ENCODE measurements at regions of chr16 and their contacts with region 1.

Region 1: DNA sequence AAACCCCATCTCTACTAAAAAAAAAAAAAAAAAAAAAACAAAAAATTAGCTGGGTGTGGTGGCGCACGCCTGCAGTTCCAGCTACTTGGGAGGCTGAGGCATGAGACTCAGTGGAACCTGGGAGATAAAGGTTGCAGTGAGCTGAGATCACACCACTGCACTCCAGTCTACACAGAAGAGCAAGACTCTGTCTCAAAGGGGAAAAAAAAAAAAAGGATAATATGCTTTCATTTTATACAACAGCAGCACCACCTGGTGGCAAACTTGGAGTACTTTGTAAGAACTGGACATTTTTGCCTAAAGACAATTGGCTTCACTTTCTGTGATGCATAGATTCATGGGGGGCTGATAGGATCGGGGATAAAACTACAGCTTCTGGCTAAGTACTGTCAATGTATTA is 8.5 kb downstream of the CHTF8 start:
- DNase-seq: peak in 4 of 10 donors; percentile 27 to 71 (median 40)
- H3K4me3 ChIP-seq: no peak overlapping the region
- H3K27ac ChIP-seq: no peak overlapping the region
- H3K27me3 ChIP-seq: no peaks in the 10 kb centered on the region
- CTCF ChIP-seq: peak; percentile 67 to 88 (median 77)

Region 2: DNA sequence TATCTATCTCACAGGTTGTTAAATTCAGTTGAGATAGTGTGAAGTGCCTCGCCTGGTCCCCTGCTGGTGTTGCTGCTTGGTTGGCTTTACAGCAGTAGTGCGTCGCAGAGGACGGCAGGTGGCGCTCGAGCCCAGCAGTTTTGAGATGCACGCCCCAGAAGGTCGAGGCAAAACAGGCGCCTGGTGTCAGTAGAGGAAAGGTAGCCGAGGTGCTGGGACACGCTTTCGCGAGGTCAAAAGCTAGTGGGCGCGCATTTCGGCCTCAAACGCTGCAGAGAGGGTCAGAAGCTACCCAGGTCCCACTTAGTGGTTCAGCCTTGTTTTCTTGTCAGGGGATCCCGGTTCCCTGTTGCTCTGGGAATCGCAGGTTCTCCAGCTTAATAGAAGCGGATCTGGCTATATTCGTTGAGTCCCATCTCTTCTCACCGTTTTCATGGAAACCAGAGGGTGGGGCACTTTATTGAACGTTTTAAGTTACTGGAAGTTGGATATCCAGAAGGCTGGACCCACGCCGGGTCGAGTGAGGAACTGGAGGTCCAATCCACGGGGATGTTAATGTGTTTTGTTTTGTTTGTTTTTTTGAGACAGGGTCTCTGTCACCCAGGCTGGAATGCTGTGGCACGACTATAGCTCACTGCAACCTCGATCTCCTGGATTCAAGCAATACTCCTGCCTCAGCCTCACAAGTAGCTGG is 595.1 kb before region 1 on chr16:
- intact Hi-C with region 1: loop called in 1 of 2 experiments (anchors 2 kb)
- DNase-seq: peak; percentile 80 to 91 (median 87)
- H3K4me3 ChIP-seq: peak overlapping the region in 55 of 59 donors; percentile 12 to 98 (median 45)
- H3K27ac ChIP-seq: peak overlapping the region in 8 of 59 donors; percentile 14 to 75 (median 46)
- H3K27me3 ChIP-seq: no peaks in the 10 kb centered on the region
- CTCF ChIP-seq: peak; percentile 69 to 99 (median 96)

Region 3: GRCh38 chr16:68538880-68539701 is 584.8 kb before region 1 on chr16 and contains the start of gene ZFP90:
- intact Hi-C with region 1: loop called in 1 of 2 experiments (anchors 5 kb)
- DNase-seq: peak; percentile 74 to 94 (median 84)
- H3K4me3 ChIP-seq: peak within 1 kb of the TSS; percentile 61 to 100 (median 98)
- H3K27ac ChIP-seq: peak within 1 kb of the TSS in 58 of 59 donors; percentile 19 to 97 (median 85)
- H3K27me3 ChIP-seq: no peaks in the 10 kb centered on the region
- CTCF ChIP-seq: peak in 42 of 56 donors; percentile 2 to 60 (median 32)
- total RNA-seq, gene ZFP90: 43.3 to 78.1 (median 60.5) TPM

Region 4: GRCh38 chr16:68704232-68704867 is 419.6 kb before region 1 on chr16:
- intact Hi-C with region 1: loop called in 1 of 2 experiments (anchors 5 kb)
- DNase-seq: peak; percentile 28 to 89 (median 85)
- H3K4me3 ChIP-seq: no peak overlapping the region
- H3K27ac ChIP-seq: peak overlapping the region in 12 of 59 donors; percentile 1 to 69 (median 46)
- H3K27me3 ChIP-seq: no peaks in the 10 kb centered on the region
- CTCF ChIP-seq: peak; percentile 27 to 90 (median 78)

Region 5: GRCh38 chr16:68848786-68849185 is 275.1 kb before region 1 on chr16:
- intact Hi-C with region 1: loop called in 1 of 2 experiments (anchors 5 kb)
- DNase-seq: no peak
- H3K4me3 ChIP-seq: no peak overlapping the region
- H3K27ac ChIP-seq: no peak overlapping the region
- H3K27me3 ChIP-seq: no peaks in the 10 kb centered on the region
- CTCF ChIP-seq: no peak

Region 6: GRCh38 chr16:68860978-68861892 is 262.7 kb before region 1 on chr16:
- intact Hi-C with region 1: no loop called
- DNase-seq: no peak
- H3K4me3 ChIP-seq: no peak overlapping the region
- H3K27ac ChIP-seq: no peak overlapping the region
- H3K27me3 ChIP-seq: no peaks in the 10 kb centered on the region
- CTCF ChIP-seq: no peak

Region 7: GRCh38 chr16:68902008-68902968 is 221.6 kb before region 1 on chr16:
- intact Hi-C with region 1: loop called (anchors 5 kb)
- DNase-seq: peak in 4 of 10 donors; percentile 5 to 44 (median 29)
- H3K4me3 ChIP-seq: no peak overlapping the region
- H3K27ac ChIP-seq: peak overlapping the region in 42 of 59 donors; percentile 5 to 79 (median 53)
- H3K27me3 ChIP-seq: no peaks in the 10 kb centered on the region
- CTCF ChIP-seq: peak; percentile 52 to 84 (median 74)

Region 8: DNA sequence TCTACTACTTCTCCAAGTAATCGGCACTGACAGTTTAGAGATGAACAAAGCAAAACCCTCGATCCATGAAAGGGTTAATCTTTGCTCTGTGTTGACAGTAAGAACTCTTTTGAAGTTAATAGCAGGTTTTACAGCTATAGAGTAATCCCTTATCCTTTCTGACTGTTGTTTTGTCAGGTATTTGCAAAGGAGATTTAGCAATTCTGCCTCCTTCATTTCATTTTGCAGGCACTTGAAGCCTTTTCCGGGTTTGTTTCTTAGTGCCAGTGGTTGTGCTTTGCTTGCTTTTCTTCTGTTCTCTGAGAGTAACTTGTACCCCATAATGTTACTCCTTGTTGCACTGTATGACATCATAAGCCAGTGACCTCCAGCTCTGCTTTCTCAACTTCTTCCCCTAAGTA is 216.1 kb before region 1 on chr16:
- intact Hi-C with region 1: loop called (anchors 5 kb)
- DNase-seq: no peak
- H3K4me3 ChIP-seq: no peak overlapping the region
- H3K27ac ChIP-seq: no peak overlapping the region
- H3K27me3 ChIP-seq: no peaks in the 10 kb centered on the region
- CTCF ChIP-seq: no peak

Region 9: GRCh38 chr16:69186642-69187445 is 62.9 kb after region 1 on chr16 and contains the start of gene SNTB2:
- intact Hi-C with region 1: no loop called
- DNase-seq: peak; percentile 79 to 95 (median 92)
- H3K4me3 ChIP-seq: peak within 1 kb of the TSS; percentile 58 to 90 (median 81)
- H3K27ac ChIP-seq: peak within 1 kb of the TSS in 55 of 59 donors; percentile 23 to 90 (median 78)
- H3K27me3 ChIP-seq: no peaks in the 10 kb centered on the region
- CTCF ChIP-seq: peak in 14 of 56 donors; percentile 7 to 35 (median 12)
- total RNA-seq, gene SNTB2: 24.5 to 81.3 (median 36.6) TPM

Region 10: DNA sequence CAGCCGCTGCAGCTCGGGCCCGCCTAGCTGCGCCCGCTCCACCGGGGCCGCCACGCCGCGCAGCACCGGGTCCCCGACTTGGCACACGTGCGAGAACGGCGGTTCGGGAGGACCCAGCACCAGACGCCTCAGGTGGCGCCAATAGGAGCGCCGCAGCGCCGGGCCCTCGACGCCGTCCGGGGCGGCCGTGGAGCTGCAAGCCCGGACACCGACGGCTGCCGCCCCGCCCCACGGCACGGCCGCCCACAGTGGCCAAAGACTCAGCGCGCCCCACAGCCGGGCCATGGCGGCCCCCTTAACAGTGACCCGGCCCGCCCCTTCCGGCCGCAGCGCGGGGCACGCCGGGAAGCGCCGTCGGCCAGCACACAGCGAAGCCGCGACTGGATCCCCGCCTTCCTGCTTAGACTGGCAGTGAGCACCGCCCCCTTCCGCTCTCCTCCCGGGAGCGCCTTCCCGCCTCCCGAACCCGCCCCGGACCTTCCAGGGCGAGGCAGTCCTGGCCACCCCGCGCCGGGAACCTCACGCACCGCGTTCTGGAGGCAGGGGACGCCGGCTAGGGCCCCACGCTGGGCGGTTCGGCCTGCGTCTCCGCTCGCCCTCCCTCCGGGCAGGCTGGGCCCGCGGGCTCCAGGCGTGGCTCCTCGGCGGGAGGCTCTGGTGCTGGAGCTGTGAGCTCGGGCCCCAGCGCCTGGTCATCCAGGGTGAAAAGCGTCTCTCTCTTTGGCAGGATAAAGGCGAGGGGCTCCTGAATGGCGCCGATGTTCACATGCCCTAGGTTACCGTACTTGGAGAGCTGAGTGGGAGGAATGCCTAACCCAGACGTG is 206.6 kb after region 1 on chr16 and contains the start of gene PDF:
- intact Hi-C with region 1: no loop called
- DNase-seq: peak; percentile 87 to 97 (median 92)
- H3K4me3 ChIP-seq: peak within 1 kb of the TSS; percentile 66 to 99 (median 83)
- H3K27ac ChIP-seq: peak within 1 kb of the TSS; percentile 33 to 96 (median 90)
- H3K27me3 ChIP-seq: no peaks in the 10 kb centered on the region
- CTCF ChIP-seq: peak in 55 of 56 donors; percentile 22 to 76 (median 51)
- total RNA-seq, gene PDF: 3.5 to 17.7 (median 8.1) TPM